GM12878 (cell line): ENCODE measurements at regions of chr15 and their contacts with region 1.

Region 1: GRCh38 chr15:89150762-89151664 is 62.8 kb downstream of the ABHD2 start:
- DNase-seq: no peak
- ATAC-seq: no peak
- H3K4me3 ChIP-seq: no peak overlapping the region
- H3K27ac ChIP-seq: no peak overlapping the region
- H3K4me1 ChIP-seq: no peaks in the 10 kb centered on the region
- H3K27me3 ChIP-seq: no peaks in the 10 kb centered on the region
- CTCF ChIP-seq: no peak
- EP300 ChIP-seq: no peak
- POLR2A ChIP-seq: no peak
- RAD21 ChIP-seq: no peak

Region 2: DNA sequence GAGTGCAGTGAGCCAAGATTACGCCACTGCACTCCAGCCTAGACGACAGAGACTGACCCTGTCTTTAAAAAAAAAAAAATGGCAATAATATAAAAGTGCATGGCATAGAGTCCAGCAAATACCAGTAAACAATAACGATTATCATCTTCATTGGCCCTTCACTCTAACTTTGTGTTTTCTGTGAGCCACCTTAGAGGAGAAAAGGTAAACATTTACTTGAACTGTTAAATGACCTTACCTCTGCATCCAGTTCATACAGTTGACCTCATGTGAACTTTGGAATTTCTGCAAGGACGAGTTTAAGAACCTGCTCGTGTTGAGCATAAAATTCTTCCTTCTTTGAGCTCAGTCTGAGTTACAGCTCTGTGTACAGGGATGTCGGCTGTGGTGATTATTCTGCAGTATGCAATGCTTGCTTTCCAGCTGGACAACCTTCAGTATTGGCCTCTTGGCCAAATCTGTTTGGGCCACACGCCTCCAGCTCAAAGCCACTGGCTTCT is 13.7 kb after region 1 on chr15:
- CTCF ChIA-PET with region 1: interaction called, 14 read pairs
- POLR2A ChIA-PET with region 1: interaction called, 3 read pairs
- RAD21 ChIA-PET with region 1: no interaction called
- SMC1A ChIA-PET with region 1: interaction called, 11 read pairs
- in situ Hi-C with region 1: no loop called
- intact Hi-C with region 1: no loop called
- DNase-seq: no peak
- ATAC-seq: no peak
- H3K4me3 ChIP-seq: no peak overlapping the region
- H3K27ac ChIP-seq: no peak overlapping the region
- H3K4me1 ChIP-seq: peaks cover 18% of the 10 kb centered on the region
- H3K27me3 ChIP-seq: no peaks in the 10 kb centered on the region
- CTCF ChIP-seq: no peak
- EP300 ChIP-seq: no peak
- POLR2A ChIP-seq: no peak
- RAD21 ChIP-seq: no peak

Region 3: GRCh38 chr15:89197503-89197971 is 46.5 kb after region 1 on chr15:
- CTCF ChIA-PET with region 1: no interaction called
- POLR2A ChIA-PET with region 1: no interaction called
- RAD21 ChIA-PET with region 1: no interaction called
- SMC1A ChIA-PET with region 1: no interaction called
- in situ Hi-C with region 1: no loop called
- intact Hi-C with region 1: no loop called
- DNase-seq: no peak
- ATAC-seq: no peak
- H3K4me3 ChIP-seq: no peak overlapping the region
- H3K27ac ChIP-seq: no peak overlapping the region
- H3K4me1 ChIP-seq: no peaks in the 10 kb centered on the region
- H3K27me3 ChIP-seq: no peaks in the 10 kb centered on the region
- CTCF ChIP-seq: no peak
- EP300 ChIP-seq: no peak
- POLR2A ChIP-seq: no peak
- RAD21 ChIP-seq: no peak

Region 4: GRCh38 chr15:89457097-89457496 is 306.1 kb after region 1 on chr15:
- CTCF ChIA-PET with region 1: no interaction called
- POLR2A ChIA-PET with region 1: no interaction called
- RAD21 ChIA-PET with region 1: no interaction called
- SMC1A ChIA-PET with region 1: no interaction called
- in situ Hi-C with region 1: no loop called
- intact Hi-C with region 1: no loop called
- DNase-seq: no peak
- ATAC-seq: peak; percentile 81
- H3K4me3 ChIP-seq: no peak overlapping the region
- H3K27ac ChIP-seq: no peak overlapping the region
- H3K4me1 ChIP-seq: no peaks in the 10 kb centered on the region
- H3K27me3 ChIP-seq: no peaks in the 10 kb centered on the region
- CTCF ChIP-seq: no peak
- EP300 ChIP-seq: no peak
- POLR2A ChIP-seq: no peak
- RAD21 ChIP-seq: no peak